Upper lobe of right lung (tissue), 1 donor: ENCODE measurements at regions of chr1 and their contacts with region 1.

Region 1: DNA sequence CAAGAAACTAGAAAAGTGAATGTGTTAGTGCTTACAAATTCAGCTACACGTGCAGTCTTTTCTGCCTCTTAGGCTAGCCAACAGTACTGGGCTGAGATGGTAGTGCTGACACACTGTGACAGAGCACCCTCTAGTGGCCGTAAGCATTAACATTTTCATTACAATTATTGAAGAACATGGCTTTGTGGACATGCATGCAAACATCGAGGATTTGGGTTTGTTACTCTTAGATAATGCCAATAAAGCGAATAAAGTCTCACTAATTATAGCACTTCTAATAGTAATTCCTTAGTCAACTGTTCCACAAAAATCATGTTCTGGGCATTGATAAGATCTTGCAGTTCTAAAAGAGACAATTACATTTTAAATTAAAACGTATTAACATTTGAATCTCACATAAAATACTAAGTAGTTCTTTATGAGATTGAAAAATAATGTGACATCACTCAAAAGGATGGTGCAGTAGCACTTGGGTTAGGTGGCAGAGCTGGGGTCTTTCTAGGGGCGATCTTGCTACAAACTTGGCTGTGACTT is 47.1 kb downstream of the MYSM1 start:
- DNase-seq: no peak
- ATAC-seq: peak; percentile 97
- H3K4me3 ChIP-seq: no peak overlapping the region
- H3K27ac ChIP-seq: no peak overlapping the region
- H3K4me1 ChIP-seq: no peaks in the 10 kb centered on the region
- H3K27me3 ChIP-seq: no peaks in the 10 kb centered on the region
- CTCF ChIP-seq: peak; percentile 86

Region 2: DNA sequence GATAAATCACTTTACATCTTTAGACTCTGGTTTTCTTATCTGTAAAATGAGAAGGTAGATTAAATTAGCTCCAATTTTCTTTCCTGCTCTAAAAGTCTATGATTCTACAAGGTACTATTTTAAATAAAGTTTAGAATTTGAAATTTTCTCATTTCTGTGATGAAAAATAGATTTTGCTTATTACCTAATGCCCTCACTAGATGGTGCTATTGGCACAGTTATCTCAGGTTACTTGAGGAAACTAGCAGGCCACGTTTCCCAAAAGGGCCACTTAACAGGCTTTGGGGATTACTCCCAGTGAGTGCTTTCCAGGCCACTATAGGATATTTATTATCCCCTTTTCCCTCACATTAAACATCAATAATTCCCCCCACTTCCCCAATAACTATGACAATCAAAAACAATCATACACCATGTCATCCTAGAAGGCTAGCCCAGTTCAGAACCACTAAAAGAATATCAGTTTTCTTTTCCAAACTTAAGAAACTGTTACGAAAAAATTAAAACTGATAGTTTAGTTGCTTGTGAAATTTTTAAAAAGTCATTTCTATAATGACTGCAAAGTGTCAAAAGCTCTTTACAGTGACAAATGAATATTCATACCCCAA is 136.8 kb before region 1 on chr1:
- intact Hi-C with region 1: loop called (anchors 10 kb)
- DNase-seq: no peak
- ATAC-seq: peak; percentile 92
- H3K4me3 ChIP-seq: no peak overlapping the region
- H3K27ac ChIP-seq: no peak overlapping the region
- H3K4me1 ChIP-seq: no peaks in the 10 kb centered on the region
- H3K27me3 ChIP-seq: no peaks in the 10 kb centered on the region
- CTCF ChIP-seq: peak; percentile 77

Region 3: GRCh38 chr1:58718435-58718834 is 65.7 kb after region 1 on chr1:
- intact Hi-C with region 1: no loop called
- DNase-seq: no peak
- ATAC-seq: no peak
- H3K4me3 ChIP-seq: no peak overlapping the region
- H3K27ac ChIP-seq: peak overlapping the region; percentile 24
- H3K4me1 ChIP-seq: peaks cover 22% of the 10 kb centered on the region
- H3K27me3 ChIP-seq: no peaks in the 10 kb centered on the region
- CTCF ChIP-seq: no peak